T-cell (primary cell): ENCODE measurements at regions of chr15 and their contacts with region 1.

Region 1: GRCh38 chr15:63772520-63772919 is 61.2 kb downstream of the HERC1 start:
- DNase-seq: no peak
- ATAC-seq: no peak
- H3K4me3 ChIP-seq: no peak overlapping the region
- H3K4me3 Mint-ChIP-seq: no peak overlapping the region
- H3K27ac ChIP-seq: no peak overlapping the region
- H3K27ac Mint-ChIP-seq: no peak overlapping the region
- H3K4me1 ChIP-seq: no peaks in the 10 kb centered on the region
- H3K4me1 Mint-ChIP-seq: peaks cover 53 to 63% (median 61%) of the 10 kb centered on the region in 3 donors
- H3K27me3 ChIP-seq: no peaks in the 10 kb centered on the region
- H3K27me3 Mint-ChIP-seq: no peaks in the 10 kb centered on the region

Region 2: DNA sequence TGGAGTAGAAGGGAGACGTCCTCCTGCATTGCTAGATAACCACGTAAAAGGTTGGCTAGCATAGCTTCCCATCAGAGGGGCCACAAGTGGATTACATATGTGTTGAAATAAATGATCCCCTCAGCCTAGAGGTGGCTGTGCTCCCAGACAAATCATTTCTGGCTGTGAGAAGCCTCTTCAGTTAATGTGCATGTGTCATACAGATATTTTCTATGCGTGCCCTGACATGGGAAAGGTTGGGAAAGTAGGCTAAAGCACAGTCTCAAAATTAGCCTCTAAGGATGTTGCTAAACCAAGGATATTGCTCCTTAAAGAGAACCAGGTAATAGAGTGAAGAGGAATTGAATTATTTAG is 250.3 kb before region 1 on chr15:
- CTCF ChIA-PET with region 1: no interaction called
- POLR2A ChIA-PET with region 1: no interaction called
- DNase-seq: no peak
- ATAC-seq: no peak
- H3K4me3 ChIP-seq: no peak overlapping the region
- H3K4me3 Mint-ChIP-seq: peak overlapping the region in 2 of 3 donors; percentile 15 to 54
- H3K27ac ChIP-seq: no peak overlapping the region
- H3K27ac Mint-ChIP-seq: no peak overlapping the region
- H3K4me1 ChIP-seq: peaks cover 35 to 51% of the 10 kb centered on the region in 2 experiments
- H3K4me1 Mint-ChIP-seq: peaks cover 95 to 99% (median 95%) of the 10 kb centered on the region in 3 donors
- H3K27me3 ChIP-seq: no peaks in the 10 kb centered on the region
- H3K27me3 Mint-ChIP-seq: no peaks in the 10 kb centered on the region

Region 3: GRCh38 chr15:63791228-63791627 is 18.7 kb after region 1 on chr15:
- CTCF ChIA-PET with region 1: no interaction called
- POLR2A ChIA-PET with region 1: interaction called in 1 of 2 experiments, 12 read pairs
- DNase-seq: no peak
- ATAC-seq: no peak
- H3K4me3 ChIP-seq: no peak overlapping the region
- H3K4me3 Mint-ChIP-seq: no peak overlapping the region
- H3K27ac ChIP-seq: no peak overlapping the region
- H3K27ac Mint-ChIP-seq: peak overlapping the region in 1 of 2 donors; percentile 4
- H3K4me1 ChIP-seq: peaks cover 2 to 5% of the 10 kb centered on the region in 2 experiments
- H3K4me1 Mint-ChIP-seq: peaks cover 40 to 49% (median 45%) of the 10 kb centered on the region in 3 donors
- H3K27me3 ChIP-seq: no peaks in the 10 kb centered on the region
- H3K27me3 Mint-ChIP-seq: no peaks in the 10 kb centered on the region

Region 4: DNA sequence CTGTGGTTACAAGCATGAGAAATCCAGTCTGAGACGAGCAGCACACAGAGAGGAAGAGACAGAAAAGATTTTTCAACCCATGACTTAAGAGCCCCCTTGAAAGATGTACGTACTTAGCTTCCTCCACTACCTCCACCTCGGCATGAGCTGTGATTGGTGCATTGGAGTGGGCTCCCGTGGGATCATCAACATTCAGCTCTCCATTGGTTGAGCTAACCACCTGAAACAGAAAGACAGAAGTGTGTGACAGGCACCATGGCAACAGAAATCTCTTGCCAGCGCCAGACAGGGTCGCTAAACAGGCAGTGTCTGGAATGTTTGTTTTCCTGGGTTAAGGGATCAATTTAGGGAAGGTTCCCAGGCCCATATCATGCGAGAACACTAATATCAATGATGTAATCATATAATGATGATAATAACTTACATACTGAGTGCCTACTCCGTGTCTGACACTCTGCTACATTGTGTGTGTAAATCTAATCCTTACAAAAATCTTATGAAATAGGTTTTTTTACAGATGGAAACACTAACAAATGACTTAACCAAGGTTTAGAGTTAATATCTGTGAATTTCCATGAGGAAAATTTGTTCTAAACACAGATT is 407.8 kb after region 1 on chr15:
- CTCF ChIA-PET with region 1: no interaction called
- POLR2A ChIA-PET with region 1: no interaction called
- DNase-seq: no peak
- ATAC-seq: no peak
- H3K4me3 ChIP-seq: no peak overlapping the region
- H3K4me3 Mint-ChIP-seq: no peak overlapping the region
- H3K27ac ChIP-seq: no peak overlapping the region
- H3K27ac Mint-ChIP-seq: no peak overlapping the region
- H3K4me1 ChIP-seq: no peaks in the 10 kb centered on the region
- H3K4me1 Mint-ChIP-seq: peaks cover 0 to 3% (median 0%) of the 10 kb centered on the region in 3 donors
- H3K27me3 ChIP-seq: no peaks in the 10 kb centered on the region
- H3K27me3 Mint-ChIP-seq: no peaks in the 10 kb centered on the region